Spleen (tissue), 13 donors: ENCODE measurements at regions of chr15 and their contacts with region 1.

Region 1: DNA sequence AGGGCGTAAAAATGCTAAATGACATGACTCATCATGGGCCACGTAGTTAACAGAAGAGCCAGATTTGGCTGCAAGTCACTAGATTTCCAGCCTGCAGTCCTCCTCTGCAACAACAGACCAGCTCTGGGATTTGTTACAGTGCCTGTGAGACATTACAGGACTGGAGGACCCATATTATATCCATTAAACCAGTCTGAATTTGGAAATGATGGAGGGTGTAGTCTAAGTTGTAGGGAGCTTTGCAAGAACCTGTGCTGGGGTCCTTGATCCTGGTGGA is 10.8 kb downstream of the ZNF774 start:
- DNase-seq: no peak
- H3K4me3 ChIP-seq: no peak overlapping the region
- H3K27ac ChIP-seq: peak overlapping the region in 4 of 8 donors; percentile 52 to 71 (median 66)
- H3K4me1 ChIP-seq: peaks cover 6 to 32% (median 22%) of the 10 kb centered on the region in 6 donors
- H3K27me3 ChIP-seq: no peaks in the 10 kb centered on the region
- CTCF ChIP-seq: no peak
- POLR2A ChIP-seq: no peak

Region 2: DNA sequence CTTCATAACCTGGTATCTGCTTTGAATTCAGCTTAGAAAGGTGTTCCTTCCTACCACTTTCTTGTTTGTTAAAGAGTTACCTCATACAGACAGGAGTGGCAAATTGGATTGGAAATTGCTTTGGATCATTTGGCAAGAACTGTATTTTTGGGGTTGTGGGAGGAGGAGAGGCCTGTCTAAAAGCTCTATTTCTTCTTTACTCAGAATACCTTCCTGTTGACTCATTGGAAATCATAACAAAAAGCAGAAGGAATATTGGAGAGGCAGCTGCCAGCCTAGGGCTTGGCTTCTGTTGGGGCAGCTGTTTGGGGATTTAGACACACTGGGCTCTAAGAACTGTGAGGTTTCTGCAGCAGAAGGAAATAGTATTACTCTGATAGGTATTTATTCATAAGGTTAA is 39.4 kb after region 1 on chr15:
- intact Hi-C with region 1: no loop called
- DNase-seq: no peak
- H3K4me3 ChIP-seq: peak overlapping the region in 1 of 8 donors; percentile 59
- H3K27ac ChIP-seq: peak overlapping the region; percentile 32 to 94 (median 88)
- H3K4me1 ChIP-seq: peaks cover 28 to 100% (median 92%) of the 10 kb centered on the region in 6 donors
- H3K27me3 ChIP-seq: no peaks in the 10 kb centered on the region
- CTCF ChIP-seq: no peak
- POLR2A ChIP-seq: no peak

Region 3: GRCh38 chr15:90412356-90413194 is 49.7 kb after region 1 on chr15:
- intact Hi-C with region 1: loop called (anchors 10 kb)
- DNase-seq: no peak
- H3K4me3 ChIP-seq: peak overlapping the region in 1 of 8 donors; percentile 31
- H3K27ac ChIP-seq: peak overlapping the region in 7 of 8 donors; percentile 19 to 80 (median 50)
- H3K4me1 ChIP-seq: peaks cover 30 to 82% (median 65%) of the 10 kb centered on the region in 6 donors
- H3K27me3 ChIP-seq: no peaks in the 10 kb centered on the region
- CTCF ChIP-seq: no peak
- POLR2A ChIP-seq: no peak

Region 4: GRCh38 chr15:90451053-90451850 is 88.4 kb after region 1 on chr15:
- intact Hi-C with region 1: no loop called
- DNase-seq: no peak
- H3K4me3 ChIP-seq: no peak overlapping the region
- H3K27ac ChIP-seq: no peak overlapping the region
- H3K4me1 ChIP-seq: no peaks in the 10 kb centered on the region
- H3K27me3 ChIP-seq: no peaks in the 10 kb centered on the region
- CTCF ChIP-seq: no peak
- POLR2A ChIP-seq: no peak

Region 5: GRCh38 chr15:90481023-90481422 is 118.1 kb after region 1 on chr15:
- intact Hi-C with region 1: no loop called
- DNase-seq: no peak
- H3K4me3 ChIP-seq: no peak overlapping the region
- H3K27ac ChIP-seq: peak overlapping the region in 4 of 8 donors; percentile 1 to 31 (median 15)
- H3K4me1 ChIP-seq: peaks cover 0 to 50% (median 33%) of the 10 kb centered on the region in 6 donors
- H3K27me3 ChIP-seq: no peaks in the 10 kb centered on the region
- CTCF ChIP-seq: no peak
- POLR2A ChIP-seq: no peak